Activated CD4-positive, alpha-beta memory T cell treated with anti-CD3 and anti-CD28 coated beads, Interleukin-2, amount 10 ng/mL, durations not matched to agents 7 days and 5 days (primary cell): ENCODE measurements at regions of chr14 and their contacts with region 1.

Region 1: GRCh38 chr14:21092273-21093011 is 6.0 kb downstream of the ZNF219 start:
- DNase-seq: peak; percentile 90
- H3K4me3 Mint-ChIP-seq: no peak overlapping the region
- H3K27ac Mint-ChIP-seq: no peak overlapping the region
- H3K4me1 Mint-ChIP-seq: peaks cover 21% of the 10 kb centered on the region
- H3K27me3 Mint-ChIP-seq: peaks cover 8% of the 10 kb centered on the region

Region 2: GRCh38 chr14:21054123-21054767 is 38.2 kb before region 1 on chr14:
- CTCF ChIA-PET with region 1: no interaction called
- POLR2A ChIA-PET with region 1: no interaction called
- DNase-seq: no peak
- H3K4me3 Mint-ChIP-seq: no peak overlapping the region
- H3K27ac Mint-ChIP-seq: no peak overlapping the region
- H3K4me1 Mint-ChIP-seq: peaks cover 8% of the 10 kb centered on the region
- H3K27me3 Mint-ChIP-seq: peaks cover 4% of the 10 kb centered on the region

Region 3: GRCh38 chr14:21071225-21072030 is 21.0 kb before region 1 on chr14:
- CTCF ChIA-PET with region 1: interaction called, 30 read pairs
- POLR2A ChIA-PET with region 1: interaction called, 19 read pairs
- DNase-seq: peak; percentile 66
- H3K4me3 Mint-ChIP-seq: peak overlapping the region; percentile 65
- H3K27ac Mint-ChIP-seq: no peak overlapping the region
- H3K4me1 Mint-ChIP-seq: peaks cover 39% of the 10 kb centered on the region
- H3K27me3 Mint-ChIP-seq: peaks cover 67% of the 10 kb centered on the region

Region 4: DNA sequence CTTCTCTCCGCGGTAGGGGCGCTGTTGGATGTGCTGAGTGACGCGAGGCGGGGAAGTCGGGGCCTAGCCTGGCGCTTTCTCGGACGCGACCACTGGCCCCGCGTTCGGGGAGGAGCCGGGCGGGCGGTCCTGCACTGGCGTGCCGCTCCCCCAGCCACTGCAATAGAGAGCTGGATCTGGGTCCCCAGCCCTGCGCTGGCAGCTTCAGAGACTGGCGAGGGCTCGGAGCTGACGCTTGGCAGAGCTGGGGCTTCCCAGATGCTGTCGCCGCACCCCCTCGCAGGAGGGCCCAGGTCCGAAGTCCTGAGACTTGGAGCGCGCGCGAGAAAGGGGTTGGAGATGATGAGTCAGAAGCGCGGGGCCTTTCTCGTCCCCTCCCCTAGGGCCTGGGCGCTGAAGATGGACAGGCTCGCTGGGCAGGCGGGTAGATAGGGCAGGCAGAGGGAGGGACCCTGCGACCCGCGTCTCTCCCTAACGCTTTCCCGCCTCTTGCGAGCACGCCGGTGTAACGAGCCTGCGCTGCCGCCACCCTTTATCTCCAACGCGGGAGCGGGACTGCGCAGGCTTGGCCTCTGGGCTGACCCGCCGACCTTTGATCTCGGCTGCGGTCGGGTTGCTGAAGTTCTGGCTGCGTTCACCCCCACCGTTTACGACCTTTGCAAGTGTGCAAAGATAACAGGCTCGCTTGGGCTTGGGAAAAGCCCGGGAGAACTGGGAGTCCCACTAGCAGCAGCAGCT is 11.4 kb after region 1 on chr14:
- CTCF ChIA-PET with region 1: interaction called, 159 read pairs
- POLR2A ChIA-PET with region 1: interaction called, 31 read pairs
- DNase-seq: peak; percentile 96
- H3K4me3 Mint-ChIP-seq: peak overlapping the region; percentile 88
- H3K27ac Mint-ChIP-seq: peak overlapping the region; percentile 78
- H3K4me1 Mint-ChIP-seq: peaks cover 50% of the 10 kb centered on the region
- H3K27me3 Mint-ChIP-seq: peaks cover 10% of the 10 kb centered on the region

Region 5: DNA sequence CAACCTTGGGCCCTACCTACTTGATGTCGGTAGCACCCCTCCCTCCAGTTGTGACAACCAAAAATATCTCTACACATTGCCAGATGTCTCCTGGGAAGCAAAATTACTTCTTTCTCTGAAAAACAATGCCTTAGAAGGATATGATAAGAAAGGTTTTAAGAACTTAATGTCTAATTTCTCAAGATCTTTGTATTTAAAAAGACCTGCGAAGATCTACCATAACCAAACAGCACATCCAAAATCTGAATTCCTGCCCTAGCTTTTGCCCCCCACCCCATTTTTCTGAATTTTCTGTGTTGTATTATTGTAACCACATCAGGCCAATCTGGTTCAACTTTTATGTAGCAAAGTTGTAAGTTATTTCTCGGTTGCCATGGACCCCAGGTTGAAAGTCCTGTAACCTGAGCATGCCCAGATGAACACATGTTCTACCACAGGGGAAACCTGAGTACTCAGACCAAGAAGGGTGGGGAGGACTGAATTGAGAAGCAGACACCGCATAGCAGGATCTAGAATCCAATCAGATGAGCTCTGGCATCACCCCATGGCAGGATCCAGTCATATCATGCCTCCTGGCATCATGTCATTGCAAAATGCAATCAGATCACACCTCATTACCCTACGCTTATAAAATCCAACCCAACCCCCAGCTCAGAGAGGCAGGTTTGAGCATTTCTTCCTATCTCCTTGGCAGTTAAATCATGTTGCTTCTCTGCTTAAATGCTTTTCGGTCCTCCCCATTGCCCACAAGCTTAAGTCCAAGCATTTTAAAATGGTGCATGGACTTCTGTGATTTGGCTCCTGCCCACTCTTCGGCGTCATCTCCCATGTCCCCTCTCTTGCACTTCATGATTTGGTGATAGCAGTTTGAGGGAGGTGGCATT is 17.2 kb after region 1 on chr14:
- CTCF ChIA-PET with region 1: interaction called, 159 read pairs
- POLR2A ChIA-PET with region 1: interaction called, 31 read pairs
- DNase-seq: no peak
- H3K4me3 Mint-ChIP-seq: no peak overlapping the region
- H3K27ac Mint-ChIP-seq: no peak overlapping the region
- H3K4me1 Mint-ChIP-seq: peaks cover 34% of the 10 kb centered on the region
- H3K27me3 Mint-ChIP-seq: no peaks in the 10 kb centered on the region

Region 6: DNA sequence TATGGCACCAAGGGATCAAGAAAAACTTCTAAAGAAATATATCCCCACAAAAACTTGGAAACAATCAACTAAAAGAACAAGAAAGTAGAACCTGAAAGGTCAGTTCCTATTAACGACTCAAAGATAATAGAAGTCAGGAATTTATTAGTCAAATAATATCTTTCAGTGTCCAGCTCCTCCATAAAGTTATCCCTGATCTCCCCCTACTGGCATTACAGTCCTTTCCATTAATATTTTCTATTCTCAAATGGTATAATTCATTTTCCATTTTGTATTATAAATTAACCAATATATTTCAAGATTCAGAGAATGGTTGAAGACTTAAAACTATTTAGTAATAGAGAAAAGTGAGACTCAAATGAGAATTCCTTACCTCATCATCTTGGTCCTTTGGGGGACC is 303.0 kb after region 1 on chr14:
- CTCF ChIA-PET with region 1: no interaction called
- POLR2A ChIA-PET with region 1: no interaction called
- DNase-seq: no peak
- H3K4me3 Mint-ChIP-seq: no peak overlapping the region
- H3K27ac Mint-ChIP-seq: no peak overlapping the region
- H3K4me1 Mint-ChIP-seq: no peaks in the 10 kb centered on the region
- H3K27me3 Mint-ChIP-seq: no peaks in the 10 kb centered on the region